ENCODE measurements at regions of chr20 and their contacts with region 1.

Region 1: DNA sequence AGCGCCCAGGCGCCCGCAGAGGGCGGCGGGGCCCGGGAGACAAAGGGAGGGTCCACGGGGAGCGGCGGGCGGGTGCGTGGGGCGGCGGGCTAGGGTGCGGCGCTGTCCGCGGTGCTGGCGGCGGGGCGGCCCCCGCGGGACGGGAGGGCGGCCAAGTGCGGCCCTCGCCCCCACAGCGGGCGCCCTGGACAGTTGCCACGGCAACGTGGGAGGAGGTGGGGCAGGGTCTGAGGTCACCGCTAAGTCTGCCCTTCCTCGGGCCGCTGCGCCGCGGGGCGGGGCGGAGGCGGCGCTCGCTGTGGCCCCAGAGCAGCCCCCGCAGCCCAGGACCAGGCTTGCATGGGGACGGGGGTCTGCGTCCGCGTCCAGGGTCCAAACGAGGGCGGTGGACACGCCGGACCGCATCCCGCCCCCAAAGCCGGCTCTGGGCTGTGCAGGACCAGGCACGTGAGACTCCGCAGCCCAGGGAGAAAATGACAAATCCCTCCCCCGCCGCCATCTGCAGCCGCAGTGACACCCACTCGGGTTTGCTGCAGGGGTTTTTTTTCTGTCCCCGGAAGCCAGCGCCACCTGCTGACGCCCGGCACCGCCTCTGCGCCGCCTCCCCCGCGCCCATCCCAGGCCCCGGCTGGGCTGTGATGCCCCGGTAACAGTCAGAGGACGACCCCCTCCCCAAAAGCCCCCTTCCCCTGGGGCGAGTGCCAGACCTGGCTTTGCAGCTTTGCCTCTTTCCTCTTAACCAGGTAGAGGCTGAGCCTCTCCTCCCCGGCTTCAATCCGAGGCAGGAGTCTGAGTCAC is 36.8 kb downstream of the YTHDF1 start:
- DNase-seq: no peak
- ATAC-seq: peak; percentile 39

Region 2: GRCh38 chr20:63056236-63056948 is 122.7 kb before region 1 on chr20:
- intact Hi-C with region 1: loop called (anchors 5 kb)
- DNase-seq: peak; percentile 45
- ATAC-seq: peak; percentile 74

Measured in Right ventricle myocardium superior (tissue), 1 donor.